HAP-1 (cell line): ENCODE measurements at regions of chr20 and their contacts with region 1.

Region 1: GRCh38 chr20:47642624-47643023 is 140.9 kb downstream of the NCOA3 start:
- DNase-seq: no peak
- H3K4me3 ChIP-seq: no peak overlapping the region
- H3K4me1 ChIP-seq: no peaks in the 10 kb centered on the region
- H3K27me3 ChIP-seq: no peaks in the 10 kb centered on the region

Region 2: GRCh38 chr20:47205577-47206498 is 436.8 kb before region 1 on chr20:
- in situ Hi-C with region 1: loop called (anchors 25 kb)
- DNase-seq: peak; percentile 10 to 58
- H3K4me3 ChIP-seq: no peak overlapping the region
- H3K4me1 ChIP-seq: no peaks in the 10 kb centered on the region
- H3K27me3 ChIP-seq: no peaks in the 10 kb centered on the region

Region 3: GRCh38 chr20:47274401-47275108 is 368.1 kb before region 1 on chr20:
- in situ Hi-C with region 1: loop called (anchors 25 kb)
- DNase-seq: no peak
- H3K4me3 ChIP-seq: no peak overlapping the region
- H3K4me1 ChIP-seq: no peaks in the 10 kb centered on the region
- H3K27me3 ChIP-seq: no peaks in the 10 kb centered on the region